ENCODE measurements at regions of chr20 and their contacts with region 1.

Region 1: GRCh38 chr20:1392823-1393506 is at the start of gene FKBP1A:
- DNase-seq: peak; percentile 90 to 97 (median 94)
- ATAC-seq: peak; percentile 91 to 99 (median 96)
- H3K4me3 ChIP-seq: peak within 1 kb of the TSS; percentile 54 to 96 (median 84)
- H3K27ac ChIP-seq: peak within 1 kb of the TSS; percentile 68 to 94 (median 89)
- H3K4me1 ChIP-seq: peaks cover 6 to 54% (median 40%) of the 10 kb centered on the region in 12 donors
- H3K27me3 ChIP-seq: peaks cover 0 to 10% (median 0%) of the 10 kb centered on the region in 9 donors
- CTCF ChIP-seq: peak in 7 of 12 donors; percentile 17 to 50 (median 24)
- POLR2A ChIP-seq: peak; percentile 38 to 80
- total RNA-seq, gene FKBP1A: 71.3 to 316 (median 144) TPM

Region 2: GRCh38 chr20:1313236-1313964 is 79.6 kb before region 1 on chr20:
- intact Hi-C with region 1: loop called in 5 of 10 experiments (anchors 2 to 5 kb)
- DNase-seq: peak; percentile 79 to 89 (median 81)
- ATAC-seq: peak; percentile 70 to 95 (median 85)
- H3K4me3 ChIP-seq: peak overlapping the region in 9 of 12 donors; percentile 22 to 50 (median 32)
- H3K27ac ChIP-seq: peak overlapping the region in 6 of 12 donors; percentile 9 to 55 (median 24)
- H3K4me1 ChIP-seq: peaks cover 0 to 15% (median 11%) of the 10 kb centered on the region in 12 donors
- H3K27me3 ChIP-seq: no peaks in the 10 kb centered on the region
- CTCF ChIP-seq: peak; percentile 96 to 100 (median 99)
- POLR2A ChIP-seq: no peak

Region 3: DNA sequence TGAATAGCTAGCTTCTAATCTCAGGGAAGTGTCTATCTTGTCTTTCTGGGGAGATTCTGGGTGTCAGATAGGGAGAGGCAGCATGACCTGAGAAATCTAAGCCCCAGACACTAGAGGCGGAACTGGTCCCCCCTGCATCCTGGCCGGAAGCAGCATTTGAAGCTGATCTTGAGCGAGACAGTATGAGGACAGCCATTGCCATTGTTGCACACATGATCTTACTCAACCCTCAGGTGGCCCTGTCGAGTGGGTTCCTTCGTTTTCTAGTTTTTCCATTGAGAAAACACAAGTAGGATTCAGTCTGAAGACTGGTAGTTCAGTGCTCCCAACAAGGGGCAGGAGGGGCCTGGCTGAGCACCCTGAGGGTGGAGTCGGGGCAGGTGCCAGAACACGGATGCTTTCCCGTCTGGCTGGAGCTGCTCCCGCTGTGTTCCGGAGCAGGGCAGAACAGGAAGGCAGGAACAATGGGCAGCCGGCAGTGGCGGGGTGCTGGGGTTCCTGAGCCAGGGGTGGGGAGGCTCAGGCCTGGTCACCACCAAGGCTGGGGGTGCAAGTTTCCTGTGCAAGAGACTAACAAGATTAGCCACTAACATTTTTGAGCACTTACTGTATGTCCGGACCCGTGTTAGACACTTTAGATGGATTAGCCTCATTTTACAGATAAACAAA is 56.1 kb before region 1 on chr20:
- intact Hi-C with region 1: loop called in 1 of 10 experiments (anchors 5 kb)
- DNase-seq: peak; percentile 87 to 91 (median 89)
- ATAC-seq: peak; percentile 91 to 97 (median 94)
- H3K4me3 ChIP-seq: peak overlapping the region in 3 of 12 donors; percentile 6 to 13 (median 10)
- H3K27ac ChIP-seq: peak overlapping the region; percentile 65 to 85 (median 75)
- H3K4me1 ChIP-seq: peaks cover 9 to 50% (median 28%) of the 10 kb centered on the region in 12 donors
- H3K27me3 ChIP-seq: no peaks in the 10 kb centered on the region
- CTCF ChIP-seq: no peak
- POLR2A ChIP-seq: no peak

Region 4: GRCh38 chr20:1437235-1437904 is 44.4 kb after region 1 on chr20:
- intact Hi-C with region 1: loop called in 1 of 10 experiments (anchors 5 kb)
- DNase-seq: peak; percentile 68 to 84 (median 73)
- ATAC-seq: peak in 3 of 4 donors; percentile 70 to 78 (median 76)
- H3K4me3 ChIP-seq: no peak overlapping the region
- H3K27ac ChIP-seq: no peak overlapping the region
- H3K4me1 ChIP-seq: peaks cover 0 to 16% (median 0%) of the 10 kb centered on the region in 12 donors
- H3K27me3 ChIP-seq: no peaks in the 10 kb centered on the region
- CTCF ChIP-seq: peak; percentile 73 to 91 (median 84)
- POLR2A ChIP-seq: no peak